ENCODE measurements at regions of chr2 and their contacts with region 1.

Region 1: GRCh38 chr2:168336864-168337263 is 89.5 kb upstream of the STK39 start:
- DNase-seq: peak in 2 of 3 donors; percentile 53 to 56
- ATAC-seq: peak; percentile 74 to 94 (median 84)
- H3K4me3 ChIP-seq: no peak overlapping the region
- H3K27ac ChIP-seq: no peak overlapping the region
- H3K4me1 ChIP-seq: no peaks in the 10 kb centered on the region
- H3K27me3 ChIP-seq: no peaks in the 10 kb centered on the region
- CTCF ChIP-seq: peak; percentile 41 to 62 (median 45)
- POLR2A ChIP-seq: no peak

Region 2: DNA sequence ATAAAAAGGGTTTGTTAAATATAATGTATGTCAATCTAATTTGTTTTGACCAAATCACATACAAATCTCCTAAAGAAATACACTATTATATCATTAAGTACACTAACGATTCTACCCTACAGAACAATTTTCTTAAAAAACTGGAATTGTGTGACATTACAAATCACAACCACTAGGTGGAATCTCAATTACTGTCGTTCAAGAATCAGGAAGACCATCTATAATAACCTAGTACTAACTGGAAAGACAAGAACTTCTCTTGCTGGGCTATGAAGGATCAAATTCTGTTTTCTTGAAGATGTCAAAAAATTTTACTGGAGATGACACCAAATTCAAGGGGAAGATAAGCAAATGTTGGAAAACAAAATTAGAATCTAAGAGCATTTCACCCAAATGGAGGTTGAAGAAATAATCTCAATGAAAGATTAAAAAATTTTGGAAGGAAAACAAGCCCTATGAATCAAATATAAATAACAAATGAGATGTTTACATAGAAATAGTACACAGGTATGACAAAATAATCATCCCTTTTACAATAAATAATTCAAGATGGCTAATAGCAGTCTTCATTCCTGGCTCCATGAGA is 200.4 kb before region 1 on chr2:
- intact Hi-C with region 1: loop called in 1 of 2 experiments (anchors 10 kb)
- DNase-seq: no peak
- ATAC-seq: peak; percentile 51 to 71 (median 61)
- H3K4me3 ChIP-seq: no peak overlapping the region
- H3K27ac ChIP-seq: no peak overlapping the region
- H3K4me1 ChIP-seq: no peaks in the 10 kb centered on the region
- H3K27me3 ChIP-seq: no peaks in the 10 kb centered on the region
- CTCF ChIP-seq: peak; percentile 45 to 67 (median 52)
- POLR2A ChIP-seq: no peak